ENCODE measurements at regions of chr3 and their contacts with region 1.

Region 1: GRCh38 chr3:109023656-109024254 is 70.1 kb upstream of the GUCA1C start:
- DNase-seq: no peak
- H3K4me3 ChIP-seq: no peak overlapping the region
- H3K27ac ChIP-seq: no peak overlapping the region
- H3K4me1 ChIP-seq: no peaks in the 10 kb centered on the region
- H3K27me3 ChIP-seq: no peaks in the 10 kb centered on the region
- CTCF ChIP-seq: peak in 2 of 3 experiments; percentile 62 to 69; a peak in 3 of 4 replicates
- EP300 ChIP-seq: no peak
- POLR2A ChIP-seq: no peak
- RAD21 ChIP-seq: peak; percentile 73 to 80

Region 2: DNA sequence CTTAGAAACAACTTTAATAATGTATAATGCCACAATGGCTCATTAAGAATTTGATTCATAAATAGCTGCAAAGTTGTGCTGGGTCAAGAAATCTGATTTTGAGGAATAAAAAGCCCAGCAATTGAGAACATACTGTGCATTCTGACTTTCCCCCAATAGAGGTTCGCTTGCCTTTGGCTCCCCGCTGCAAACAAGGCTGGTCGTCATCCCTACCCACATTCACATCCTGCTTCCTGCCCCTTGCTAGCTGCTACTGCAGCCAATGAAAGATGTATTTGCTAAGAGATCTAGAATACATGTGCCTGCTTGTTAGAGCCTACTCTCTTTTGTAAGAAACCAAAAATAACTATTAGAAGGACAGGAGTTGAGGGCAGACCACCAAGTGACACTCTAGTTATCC is 18.3 kb before region 1 on chr3:
- CTCF ChIA-PET with region 1: interaction called, 12 read pairs
- POLR2A ChIA-PET with region 1: no interaction called
- DNase-seq: no peak
- H3K4me3 ChIP-seq: no peak overlapping the region
- H3K27ac ChIP-seq: no peak overlapping the region
- H3K4me1 ChIP-seq: no peaks in the 10 kb centered on the region
- H3K27me3 ChIP-seq: no peaks in the 10 kb centered on the region
- CTCF ChIP-seq: no peak
- EP300 ChIP-seq: no peak
- POLR2A ChIP-seq: no peak
- RAD21 ChIP-seq: no peak

Region 3: DNA sequence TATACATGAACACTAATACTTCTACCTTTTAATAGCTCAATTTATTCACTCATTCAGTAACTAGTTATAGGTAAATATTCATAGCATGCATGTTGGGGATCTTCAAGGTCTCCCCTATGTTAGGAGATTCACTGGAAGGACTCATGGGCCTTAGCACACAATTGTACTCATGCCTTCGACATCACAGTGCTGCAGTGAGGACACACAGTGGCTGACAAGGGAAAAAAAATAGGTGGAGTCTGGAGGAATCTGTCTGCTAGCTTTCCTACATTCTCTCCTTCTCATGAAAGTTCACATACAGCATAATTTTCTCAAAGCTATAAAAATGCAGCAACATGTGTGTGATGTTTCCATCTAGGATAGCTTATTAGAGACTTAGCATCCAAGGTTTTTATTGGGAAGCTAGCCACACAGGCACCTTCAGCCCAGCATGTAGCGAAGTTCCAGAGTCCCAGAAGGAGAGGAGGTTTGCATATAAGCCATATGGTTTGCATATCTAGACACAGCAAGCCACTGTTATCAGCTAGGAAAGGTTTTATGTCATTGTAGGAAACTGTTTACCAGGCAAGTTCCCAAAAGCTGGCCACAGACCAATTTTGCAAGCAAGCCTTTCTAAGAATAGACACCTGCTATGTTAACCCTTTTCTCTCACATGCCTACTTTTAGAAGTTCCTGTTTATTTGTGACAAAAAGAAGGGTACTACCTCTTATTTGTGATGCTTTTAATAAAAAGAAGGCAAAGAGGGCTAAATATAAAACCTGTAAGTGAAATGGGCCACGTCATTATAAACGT is 47.8 kb after region 1 on chr3:
- CTCF ChIA-PET with region 1: interaction called, 22 read pairs
- POLR2A ChIA-PET with region 1: no interaction called
- DNase-seq: no peak
- H3K4me3 ChIP-seq: no peak overlapping the region
- H3K27ac ChIP-seq: no peak overlapping the region
- H3K4me1 ChIP-seq: no peaks in the 10 kb centered on the region
- H3K27me3 ChIP-seq: no peaks in the 10 kb centered on the region
- CTCF ChIP-seq: peak in 1 of 3 experiments; percentile 18; a peak in 2 of 4 replicates
- EP300 ChIP-seq: no peak
- POLR2A ChIP-seq: no peak
- RAD21 ChIP-seq: peak; percentile 33 to 41

Region 4: DNA sequence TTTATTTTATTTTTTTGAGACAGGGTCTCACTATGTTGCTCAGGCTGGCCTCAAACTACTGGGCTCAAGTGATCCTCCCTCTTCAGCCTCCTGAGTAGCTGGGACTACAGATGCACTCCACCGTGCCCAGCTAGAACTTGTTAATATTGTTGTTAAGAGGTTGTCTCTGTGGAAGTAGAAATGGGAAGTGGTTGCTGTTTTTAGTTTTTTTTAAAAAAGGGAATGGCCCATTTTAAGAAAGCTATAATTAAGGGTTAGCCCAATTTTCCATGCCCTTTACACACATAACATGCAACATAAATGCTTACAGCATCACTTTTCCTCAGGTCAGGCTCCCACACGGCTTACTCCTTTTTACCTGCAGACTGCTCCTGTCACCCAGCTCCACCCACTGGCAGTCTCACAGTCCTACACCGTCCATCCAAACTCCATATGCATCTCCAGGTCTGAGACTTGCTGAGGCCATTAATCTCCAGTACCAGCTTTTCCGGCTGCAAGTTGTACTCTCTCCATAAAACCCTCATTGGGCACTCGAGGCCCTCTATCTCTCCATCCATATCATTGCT is 74.4 kb after region 1 on chr3:
- CTCF ChIA-PET with region 1: interaction called, 37 read pairs
- POLR2A ChIA-PET with region 1: no interaction called
- DNase-seq: no peak
- H3K4me3 ChIP-seq: no peak overlapping the region
- H3K27ac ChIP-seq: no peak overlapping the region
- H3K4me1 ChIP-seq: no peaks in the 10 kb centered on the region
- H3K27me3 ChIP-seq: no peaks in the 10 kb centered on the region
- CTCF ChIP-seq: peak; percentile 64 to 81 (median 76)
- EP300 ChIP-seq: no peak
- POLR2A ChIP-seq: no peak
- RAD21 ChIP-seq: peak; percentile 68 to 77

Region 5: GRCh38 chr3:109117939-109118338 is 94.2 kb after region 1 on chr3 and contains the start of gene MORC1:
- CTCF ChIA-PET with region 1: no interaction called
- POLR2A ChIA-PET with region 1: no interaction called
- DNase-seq: no peak
- H3K4me3 ChIP-seq: no peak within 1 kb of the TSS
- H3K27ac ChIP-seq: no peak within 1 kb of the TSS
- H3K4me1 ChIP-seq: no peaks in the 10 kb centered on the region
- H3K27me3 ChIP-seq: no peaks in the 10 kb centered on the region
- CTCF ChIP-seq: no peak
- EP300 ChIP-seq: no peak
- POLR2A ChIP-seq: no peak
- RAD21 ChIP-seq: no peak
- total RNA-seq, gene MORC1: not detected in 2 replicates